ENCODE measurements at regions of chr2 and their contacts with region 1.

Region 1: DNA sequence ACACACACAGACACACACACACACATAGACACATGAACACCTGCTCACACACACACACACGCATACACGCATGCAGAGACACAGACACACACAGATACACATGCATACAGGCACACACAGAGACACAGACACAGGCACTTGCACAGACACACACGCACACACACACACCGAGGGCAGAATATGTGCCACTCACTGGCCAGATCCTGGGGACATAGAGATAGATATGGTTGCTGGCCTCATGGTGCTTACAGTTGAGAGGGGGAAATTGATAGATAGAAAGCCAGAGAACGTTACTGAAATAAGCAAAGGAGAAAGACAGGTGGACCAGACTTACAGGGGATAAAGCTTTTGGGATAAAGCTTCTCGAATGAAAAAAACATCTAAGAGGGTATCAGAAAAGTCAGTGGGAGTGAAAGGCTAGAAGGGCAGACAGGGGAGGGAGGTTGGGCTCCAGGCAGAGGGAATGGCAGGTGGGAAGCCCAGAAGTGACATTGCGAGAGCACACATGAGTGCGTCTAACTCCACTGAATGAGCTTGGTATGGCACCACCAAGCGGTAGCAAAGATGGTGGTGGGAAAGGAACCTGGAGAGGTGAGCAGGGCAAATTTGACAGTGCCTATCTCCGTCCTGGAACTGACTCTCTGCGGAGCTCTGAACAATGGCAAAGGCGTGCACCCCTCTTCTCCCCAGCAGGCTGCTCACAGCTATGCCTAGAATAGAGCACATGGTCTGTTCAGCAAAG is 390.1 kb upstream of the TRIB2 start:
- DNase-seq: peak; percentile 53
- ATAC-seq: peak; percentile 33
- H3K4me3 ChIP-seq: no peak overlapping the region
- H3K4me3 Mint-ChIP-seq: peak overlapping the region; percentile 12
- H3K27ac ChIP-seq: no peak overlapping the region
- H3K27ac Mint-ChIP-seq: peak overlapping the region; percentile 17
- H3K4me1 ChIP-seq: peaks cover 14 to 20% of the 10 kb centered on the region in 2 donors
- H3K4me1 Mint-ChIP-seq: peaks cover 24% of the 10 kb centered on the region
- H3K27me3 ChIP-seq: no peaks in the 10 kb centered on the region
- H3K27me3 Mint-ChIP-seq: no peaks in the 10 kb centered on the region
- CTCF ChIP-seq: peak; percentile 29

Region 2: GRCh38 chr2:11829947-11830707 is 496.5 kb before region 1 on chr2:
- CTCF ChIA-PET with region 1: interaction called, 12 read pairs
- POLR2A ChIA-PET with region 1: no interaction called
- intact Hi-C with region 1: loop called (anchors 1 kb)
- DNase-seq: peak; percentile 58
- ATAC-seq: peak; percentile 59
- H3K4me3 ChIP-seq: peak overlapping the region in 4 of 5 experiments; percentile 3 to 34 (median 20)
- H3K4me3 Mint-ChIP-seq: peak overlapping the region; percentile 83
- H3K27ac ChIP-seq: peak overlapping the region; percentile 40 to 64
- H3K27ac Mint-ChIP-seq: peak overlapping the region; percentile 78
- H3K4me1 ChIP-seq: peaks cover 42 to 63% of the 10 kb centered on the region in 2 donors
- H3K4me1 Mint-ChIP-seq: peaks cover 61% of the 10 kb centered on the region
- H3K27me3 ChIP-seq: no peaks in the 10 kb centered on the region
- H3K27me3 Mint-ChIP-seq: no peaks in the 10 kb centered on the region
- CTCF ChIP-seq: no peak

Region 3: GRCh38 chr2:12162269-12163247 is 164.1 kb before region 1 on chr2:
- CTCF ChIA-PET with region 1: no interaction called
- POLR2A ChIA-PET with region 1: no interaction called
- intact Hi-C with region 1: no loop called
- DNase-seq: no peak
- ATAC-seq: no peak
- H3K4me3 ChIP-seq: no peak overlapping the region
- H3K4me3 Mint-ChIP-seq: no peak overlapping the region
- H3K27ac ChIP-seq: no peak overlapping the region
- H3K27ac Mint-ChIP-seq: no peak overlapping the region
- H3K4me1 ChIP-seq: no peaks in the 10 kb centered on the region
- H3K4me1 Mint-ChIP-seq: peaks cover under 1% of the 10 kb centered on the region
- H3K27me3 ChIP-seq: no peaks in the 10 kb centered on the region
- H3K27me3 Mint-ChIP-seq: no peaks in the 10 kb centered on the region
- CTCF ChIP-seq: no peak

Region 4: GRCh38 chr2:12658310-12658945 is 331.8 kb after region 1 on chr2:
- CTCF ChIA-PET with region 1: no interaction called
- POLR2A ChIA-PET with region 1: no interaction called
- intact Hi-C with region 1: no loop called
- DNase-seq: no peak
- ATAC-seq: no peak
- H3K4me3 ChIP-seq: no peak overlapping the region
- H3K4me3 Mint-ChIP-seq: no peak overlapping the region
- H3K27ac ChIP-seq: no peak overlapping the region
- H3K27ac Mint-ChIP-seq: no peak overlapping the region
- H3K4me1 ChIP-seq: no peaks in the 10 kb centered on the region
- H3K4me1 Mint-ChIP-seq: no peaks in the 10 kb centered on the region
- H3K27me3 ChIP-seq: no peaks in the 10 kb centered on the region
- H3K27me3 Mint-ChIP-seq: no peaks in the 10 kb centered on the region
- CTCF ChIP-seq: no peak

Measured in B cell (primary cell).